Heart right ventricle (tissue), 16 donors: ENCODE measurements at regions of chr4 and their contacts with region 1.

Region 1: GRCh38 chr4:1752284-1753041 is 31.1 kb downstream of the TACC3 start:
- DNase-seq: no peak
- ATAC-seq: peak in 4 of 8 donors; percentile 9 to 24 (median 18)
- H3K4me3 ChIP-seq: peak overlapping the region in 2 of 10 donors; percentile 8 to 20
- H3K27ac ChIP-seq: peak overlapping the region in 2 of 10 donors; percentile 10 to 44
- H3K4me1 ChIP-seq: peaks cover 0 to 23% (median 14%) of the 10 kb centered on the region in 9 donors
- H3K27me3 ChIP-seq: peaks cover 0 to 11% (median 7%) of the 10 kb centered on the region in 7 donors
- CTCF ChIP-seq: no peak

Region 2: GRCh38 chr4:1794809-1795303 is 42.4 kb after region 1 on chr4:
- intact Hi-C with region 1: loop called in 1 of 10 experiments (anchors 5 kb)
- DNase-seq: no peak
- ATAC-seq: no peak
- H3K4me3 ChIP-seq: peak overlapping the region in 9 of 10 donors; percentile 32 to 60 (median 51)
- H3K27ac ChIP-seq: no peak overlapping the region
- H3K4me1 ChIP-seq: peaks cover 8 to 23% (median 18%) of the 10 kb centered on the region in 9 donors
- H3K27me3 ChIP-seq: peaks cover 19 to 65% (median 51%) of the 10 kb centered on the region in 7 donors
- CTCF ChIP-seq: no peak

Region 3: GRCh38 chr4:1887052-1887451 is 134.6 kb after region 1 on chr4:
- intact Hi-C with region 1: no loop called
- DNase-seq: no peak
- ATAC-seq: no peak
- H3K4me3 ChIP-seq: no peak overlapping the region
- H3K27ac ChIP-seq: peak overlapping the region in 7 of 10 donors; percentile 13 to 64 (median 37)
- H3K4me1 ChIP-seq: peaks cover 0 to 44% (median 15%) of the 10 kb centered on the region in 9 donors
- H3K27me3 ChIP-seq: no peaks in the 10 kb centered on the region
- CTCF ChIP-seq: no peak